ENCODE measurements at regions of chr12 and their contacts with region 1.

Region 1: GRCh38 chr12:132638541-132639418 is 20.2 kb downstream of the P2RX2 start:
- DNase-seq: peak; percentile 41
- H3K4me3 ChIP-seq: no peak overlapping the region
- H3K27ac ChIP-seq: no peak overlapping the region
- H3K4me1 ChIP-seq: peaks cover 32% of the 10 kb centered on the region
- CTCF ChIP-seq: peak; percentile 88

Region 2: GRCh38 chr12:132600048-132601032 is 38.4 kb before region 1 on chr12:
- CTCF ChIA-PET with region 1: interaction called, 6 read pairs
- POLR2A ChIA-PET with region 1: interaction called, 11 read pairs
- intact Hi-C with region 1: loop called (anchors 1 kb)
- DNase-seq: peak; percentile 16
- H3K4me3 ChIP-seq: no peak overlapping the region
- H3K27ac ChIP-seq: no peak overlapping the region
- H3K4me1 ChIP-seq: peaks cover 3% of the 10 kb centered on the region
- CTCF ChIP-seq: peak; percentile 65

Measured in OCI-LY7 (cell line).